ENCODE measurements at regions of chr3 and their contacts with region 1.

Region 1: GRCh38 chr3:98901392-98902350 is at the start of gene DCBLD2:
- DNase-seq: peak; percentile 94
- ATAC-seq: peak; percentile 99
- H3K4me3 ChIP-seq: peak within 1 kb of the TSS; percentile 81
- H3K27ac ChIP-seq: peak within 1 kb of the TSS; percentile 91
- H3K4me1 ChIP-seq: no peaks in the 10 kb centered on the region
- H3K27me3 ChIP-seq: no peaks in the 10 kb centered on the region
- CTCF ChIP-seq: no peak
- EP300 ChIP-seq: no peak
- POLR2A ChIP-seq: peak; percentile 89
- RAD21 ChIP-seq: no peak
- polyA plus RNA-seq, gene DCBLD2: 1.6 to 2.6 TPM

Region 2: GRCh38 chr3:97764407-97765238 is 1137.0 kb before region 1 on chr3 and contains the start of gene ARL6:
- CTCF ChIA-PET with region 1: no interaction called
- POLR2A ChIA-PET with region 1: no interaction called
- RAD21 ChIA-PET with region 1: no interaction called
- SMC1A ChIA-PET with region 1: no interaction called
- in situ Hi-C with region 1: no loop called
- intact Hi-C with region 1: loop called (anchors 10 kb)
- DNase-seq: peak; percentile 56
- ATAC-seq: peak; percentile 96
- H3K4me3 ChIP-seq: peak within 1 kb of the TSS; percentile 98
- H3K27ac ChIP-seq: peak within 1 kb of the TSS; percentile 76
- H3K4me1 ChIP-seq: no peaks in the 10 kb centered on the region; the same call in 1 of the 2 replicates
- H3K27me3 ChIP-seq: no peaks in the 10 kb centered on the region
- CTCF ChIP-seq: 0 out of 6 replicates have a peak, but pooled peaks of 1 of the 3 experiments have one; percentile 3
- EP300 ChIP-seq: no peak
- POLR2A ChIP-seq: peak; percentile 85
- RAD21 ChIP-seq: no peak
- polyA plus RNA-seq, gene ARL6: 4.3 to 4.8 TPM

Region 3: GRCh38 chr3:98801043-98801747 is 100.5 kb before region 1 on chr3:
- CTCF ChIA-PET with region 1: no interaction called
- POLR2A ChIA-PET with region 1: no interaction called
- RAD21 ChIA-PET with region 1: no interaction called
- SMC1A ChIA-PET with region 1: no interaction called
- in situ Hi-C with region 1: no loop called
- intact Hi-C with region 1: no loop called
- DNase-seq: no peak
- ATAC-seq: no peak
- H3K4me3 ChIP-seq: no peak overlapping the region
- H3K27ac ChIP-seq: no peak overlapping the region
- H3K4me1 ChIP-seq: no peaks in the 10 kb centered on the region
- H3K27me3 ChIP-seq: no peaks in the 10 kb centered on the region
- CTCF ChIP-seq: no peak
- EP300 ChIP-seq: no peak
- POLR2A ChIP-seq: no peak
- RAD21 ChIP-seq: no peak

Region 4: GRCh38 chr3:98980915-98981596 is 79.4 kb after region 1 on chr3:
- CTCF ChIA-PET with region 1: no interaction called
- POLR2A ChIA-PET with region 1: no interaction called
- RAD21 ChIA-PET with region 1: no interaction called
- SMC1A ChIA-PET with region 1: no interaction called
- in situ Hi-C with region 1: no loop called
- intact Hi-C with region 1: loop called (anchors 5 kb)
- DNase-seq: peak; percentile 79
- ATAC-seq: peak; percentile 93
- H3K4me3 ChIP-seq: no peak overlapping the region
- H3K27ac ChIP-seq: no peak overlapping the region
- H3K4me1 ChIP-seq: no peaks in the 10 kb centered on the region; the same call in 1 of the 2 replicates
- H3K27me3 ChIP-seq: no peaks in the 10 kb centered on the region
- CTCF ChIP-seq: no peak
- EP300 ChIP-seq: peak; percentile 63 to 71; a peak in 3 of 4 replicates
- POLR2A ChIP-seq: no peak
- RAD21 ChIP-seq: no peak